Cardiac septum (tissue), 1 donor: ENCODE measurements at regions of chr7 and their contacts with region 1.

Region 1: DNA sequence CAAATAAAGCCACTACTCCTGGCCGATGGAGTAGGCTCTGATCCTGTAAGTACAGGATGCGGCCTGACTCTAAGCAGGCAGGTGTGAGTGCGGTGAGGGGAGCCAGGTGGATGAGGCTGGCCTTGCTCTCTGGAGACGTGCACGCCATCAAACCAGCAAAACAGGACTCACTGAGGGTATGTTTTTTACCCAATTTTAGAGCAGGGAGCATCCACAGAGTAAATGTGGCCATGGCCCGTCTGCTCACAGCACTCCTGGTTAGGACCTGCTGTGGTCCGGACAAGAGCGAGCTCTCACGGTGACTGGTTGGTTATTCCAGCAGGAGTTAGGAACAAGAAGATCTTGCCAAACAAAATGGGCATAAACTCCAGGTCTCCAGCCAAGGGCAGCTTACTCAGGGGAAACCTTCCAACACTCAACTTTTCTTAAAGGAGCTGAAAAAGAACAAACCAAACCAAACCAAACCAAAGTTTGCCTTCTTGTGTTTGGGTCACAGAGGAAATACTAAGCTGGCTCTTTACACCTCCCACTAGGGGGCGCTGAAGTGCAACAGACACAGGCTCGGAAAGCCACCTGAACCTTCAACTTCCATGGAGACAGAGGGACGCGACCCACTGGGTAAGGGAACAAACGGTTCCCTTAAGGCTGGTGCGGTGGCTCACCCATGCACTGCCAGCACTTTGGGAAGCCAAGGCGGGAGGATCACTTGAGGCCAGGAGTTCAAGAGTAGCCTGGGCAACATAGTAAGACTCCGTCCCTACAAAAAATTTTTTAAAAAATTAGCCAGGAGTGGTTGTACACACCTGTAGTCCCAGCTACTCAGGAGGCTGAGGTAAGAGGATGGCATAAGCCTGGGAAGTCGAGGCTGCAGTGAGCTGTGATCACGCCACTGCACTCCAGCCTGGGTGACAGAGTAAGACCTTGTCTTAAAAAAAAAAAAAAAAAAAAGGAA is 122.4 kb downstream of the CLEC2L start:
- DNase-seq: peak; percentile 89

Region 2: GRCh38 chr7:139731802-139732470 is 86.1 kb after region 1 on chr7:
- intact Hi-C with region 1: loop called (anchors 5 kb)
- DNase-seq: no peak

Region 3: GRCh38 chr7:139777948-139778841 is 132.3 kb after region 1 on chr7 and contains the start of gene HIPK2:
- intact Hi-C with region 1: loop called (anchors 2 kb)
- DNase-seq: peak; percentile 88
- total RNA-seq, gene HIPK2: 218 TPM

Region 4: GRCh38 chr7:139915864-139916716 is 270.2 kb after region 1 on chr7:
- intact Hi-C with region 1: loop called (anchors 5 kb)
- DNase-seq: no peak